ENCODE measurements at regions of chr7 and their contacts with region 1.

Region 1: DNA sequence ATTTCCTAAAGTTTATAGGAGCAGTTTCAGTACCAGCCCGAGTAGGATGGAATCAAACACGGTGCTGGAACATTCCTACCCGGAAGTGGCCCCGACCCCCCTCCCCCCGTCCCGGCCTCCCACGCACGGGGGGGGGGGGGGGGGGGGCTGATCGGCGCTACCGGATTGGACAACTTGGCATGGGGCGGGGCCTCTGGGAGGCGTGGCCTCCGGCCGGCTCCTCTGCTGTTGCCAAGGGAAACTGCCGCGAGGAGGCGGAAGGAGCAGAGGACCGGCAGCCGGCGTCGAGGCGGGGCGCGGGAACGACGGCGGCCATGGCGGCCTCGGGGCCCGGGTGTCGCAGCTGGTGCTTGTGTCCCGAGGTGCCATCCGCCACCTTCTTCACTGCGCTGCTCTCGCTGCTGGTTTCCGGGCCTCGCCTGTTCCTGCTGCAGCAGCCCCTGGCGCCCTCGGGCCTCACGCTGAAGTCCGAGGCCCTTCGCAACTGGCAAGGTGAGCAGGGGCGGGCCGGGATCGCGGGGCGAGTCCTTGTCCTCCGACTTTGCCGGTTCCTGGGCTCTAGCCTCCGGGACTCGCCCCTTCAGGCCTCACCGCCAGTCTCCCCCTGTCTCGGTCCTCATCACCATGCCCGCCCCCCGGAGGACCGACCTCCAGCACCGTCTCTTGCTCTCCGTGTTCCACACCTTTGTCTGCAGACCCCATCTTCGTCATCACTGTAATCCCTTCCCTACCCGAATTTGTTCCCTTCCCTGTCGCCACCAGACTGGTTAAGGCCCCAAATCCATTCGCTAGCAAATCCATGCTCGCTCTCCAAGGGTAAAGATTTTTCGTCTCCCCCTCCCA is at the start of gene RHBDD2:
- DNase-seq: peak; percentile 97
- H3K4me3 Mint-ChIP-seq: peak within 1 kb of the TSS; percentile 93
- H3K27ac Mint-ChIP-seq: peak within 1 kb of the TSS; percentile 91
- H3K4me1 Mint-ChIP-seq: peaks cover 31% of the 10 kb centered on the region
- H3K27me3 Mint-ChIP-seq: no peaks in the 10 kb centered on the region
- total RNA-seq, gene RHBDD2: 21.5 to 24.0 TPM

Region 2: GRCh38 chr7:74514131-74514591 is 1364.8 kb before region 1 on chr7:
- CTCF ChIA-PET with region 1: no interaction called
- intact Hi-C with region 1: no loop called
- DNase-seq: no peak
- H3K4me3 Mint-ChIP-seq: no peak overlapping the region
- H3K27ac Mint-ChIP-seq: no peak overlapping the region
- H3K4me1 Mint-ChIP-seq: no peaks in the 10 kb centered on the region
- H3K27me3 Mint-ChIP-seq: no peaks in the 10 kb centered on the region

Region 3: DNA sequence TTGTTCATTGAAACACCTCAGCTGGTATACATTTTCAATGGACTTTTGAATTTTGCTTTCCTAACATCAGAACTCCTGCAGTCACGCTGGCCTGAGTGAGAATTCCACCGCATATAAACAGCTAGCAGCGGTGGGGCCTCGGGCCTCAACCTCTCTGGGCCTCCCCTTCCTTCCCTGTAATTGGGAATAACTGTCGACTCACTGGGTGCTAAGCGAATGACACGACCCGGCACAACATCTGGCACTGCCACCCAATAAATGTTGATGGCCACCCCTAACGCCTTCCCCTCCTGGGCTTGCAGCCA is 806.1 kb before region 1 on chr7:
- CTCF ChIA-PET with region 1: no interaction called
- intact Hi-C with region 1: loop called (anchors 5 kb)
- DNase-seq: peak; percentile 31
- H3K4me3 Mint-ChIP-seq: peak overlapping the region; percentile 95
- H3K27ac Mint-ChIP-seq: peak overlapping the region; percentile 95
- H3K4me1 Mint-ChIP-seq: peaks cover 13% of the 10 kb centered on the region
- H3K27me3 Mint-ChIP-seq: no peaks in the 10 kb centered on the region

Region 4: DNA sequence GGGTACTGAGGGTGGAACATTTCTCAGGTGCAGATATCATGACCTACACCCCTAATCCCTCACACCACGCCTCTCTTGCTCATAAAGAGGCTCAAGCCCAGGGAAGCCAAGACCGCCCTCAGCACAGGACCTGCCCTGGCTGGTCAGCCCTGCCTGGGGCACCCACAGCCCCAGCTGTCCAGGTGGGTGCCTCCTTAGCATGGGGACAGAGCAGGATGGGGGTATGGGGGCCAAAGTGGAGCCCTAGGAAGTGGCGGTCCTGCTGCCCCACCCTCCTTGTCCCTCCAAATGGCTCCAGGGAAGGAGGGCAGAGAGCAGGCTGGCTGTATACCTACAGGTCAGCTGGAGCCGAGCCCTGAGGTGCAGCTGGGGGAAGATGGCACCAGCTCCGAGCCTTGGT is 20.1 kb after region 1 on chr7:
- CTCF ChIA-PET with region 1: no interaction called
- intact Hi-C with region 1: no loop called
- DNase-seq: no peak
- H3K4me3 Mint-ChIP-seq: no peak overlapping the region
- H3K27ac Mint-ChIP-seq: no peak overlapping the region
- H3K4me1 Mint-ChIP-seq: no peaks in the 10 kb centered on the region
- H3K27me3 Mint-ChIP-seq: no peaks in the 10 kb centered on the region

Region 5: DNA sequence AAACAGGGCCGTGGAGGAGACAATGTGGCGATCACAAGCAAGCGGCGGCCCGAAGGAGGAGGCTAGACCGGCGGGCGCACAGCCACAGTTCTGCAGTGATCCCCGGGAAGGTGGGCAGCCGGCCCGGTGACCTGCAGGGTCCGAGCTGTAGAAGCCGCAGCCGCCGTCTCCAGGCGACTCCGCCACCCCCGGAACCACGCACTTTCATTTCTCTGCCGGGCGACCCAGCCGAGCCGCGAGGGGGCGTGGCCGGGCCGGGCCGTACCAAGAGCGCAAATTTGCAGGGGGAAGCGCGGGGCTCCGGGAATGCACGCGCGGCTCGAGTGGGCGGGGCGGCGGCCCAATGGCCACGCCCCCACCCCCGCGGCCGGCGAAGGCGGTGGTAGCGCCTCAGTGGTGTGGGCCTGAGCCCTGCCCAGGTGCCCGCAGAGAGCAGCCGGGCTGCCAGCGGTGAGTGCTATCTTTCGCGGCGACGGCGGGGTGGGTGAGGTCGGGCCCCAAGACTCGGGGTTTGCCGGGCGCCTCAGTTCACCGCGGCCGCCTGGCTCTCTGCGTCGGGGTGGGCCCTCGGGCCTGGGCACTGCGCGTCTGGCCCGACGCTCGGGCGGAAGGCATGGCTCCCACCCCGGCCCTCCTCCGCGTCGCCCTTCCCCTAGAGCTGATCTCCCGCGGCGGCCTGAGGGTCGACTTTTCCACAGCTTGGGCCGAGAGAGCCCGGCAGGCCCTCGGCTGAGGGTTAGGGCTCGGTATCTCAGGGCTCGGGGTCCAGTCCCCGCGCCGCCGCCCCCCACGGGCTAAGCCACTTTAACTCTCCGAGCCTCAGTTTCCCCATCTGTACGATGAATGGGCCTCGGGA is 36.0 kb after region 1 on chr7 and contains the start of gene POR:
- CTCF ChIA-PET with region 1: no interaction called
- intact Hi-C with region 1: loop called (anchors 1 kb)
- DNase-seq: peak; percentile 94
- H3K4me3 Mint-ChIP-seq: peak within 1 kb of the TSS; percentile 88
- H3K27ac Mint-ChIP-seq: peak within 1 kb of the TSS; percentile 85
- H3K4me1 Mint-ChIP-seq: peaks cover 30% of the 10 kb centered on the region
- H3K27me3 Mint-ChIP-seq: no peaks in the 10 kb centered on the region
- total RNA-seq, gene POR: 22.9 to 26.0 TPM

Region 6: GRCh38 chr7:76011442-76011861 is 132.5 kb after region 1 on chr7:
- CTCF ChIA-PET with region 1: no interaction called
- intact Hi-C with region 1: loop called (anchors 1 kb)
- DNase-seq: no peak
- H3K4me3 Mint-ChIP-seq: no peak overlapping the region
- H3K27ac Mint-ChIP-seq: no peak overlapping the region
- H3K4me1 Mint-ChIP-seq: peaks cover 25% of the 10 kb centered on the region
- H3K27me3 Mint-ChIP-seq: peaks cover 2% of the 10 kb centered on the region

Region 7: GRCh38 chr7:76166404-76167255 is 287.6 kb after region 1 on chr7:
- CTCF ChIA-PET with region 1: no interaction called
- intact Hi-C with region 1: loop called (anchors 2 kb)
- DNase-seq: peak; percentile 94
- H3K4me3 Mint-ChIP-seq: peak overlapping the region; percentile 84
- H3K27ac Mint-ChIP-seq: peak overlapping the region; percentile 85
- H3K4me1 Mint-ChIP-seq: peaks cover 8% of the 10 kb centered on the region
- H3K27me3 Mint-ChIP-seq: no peaks in the 10 kb centered on the region

Region 8: GRCh38 chr7:76359111-76359978 is 480.4 kb after region 1 on chr7:
- CTCF ChIA-PET with region 1: no interaction called
- intact Hi-C with region 1: loop called (anchors 5 kb)
- DNase-seq: peak; percentile 99
- H3K4me3 Mint-ChIP-seq: peak overlapping the region; percentile 91
- H3K27ac Mint-ChIP-seq: peak overlapping the region; percentile 94
- H3K4me1 Mint-ChIP-seq: peaks cover 42% of the 10 kb centered on the region
- H3K27me3 Mint-ChIP-seq: no peaks in the 10 kb centered on the region

Measured in activated naive CD4-positive, alpha-beta T cell treated with anti-CD3 and anti-CD28 coated beads for 36 hours (primary cell).